ENCODE measurements at regions of chr2 and their contacts with region 1.

Region 1: DNA sequence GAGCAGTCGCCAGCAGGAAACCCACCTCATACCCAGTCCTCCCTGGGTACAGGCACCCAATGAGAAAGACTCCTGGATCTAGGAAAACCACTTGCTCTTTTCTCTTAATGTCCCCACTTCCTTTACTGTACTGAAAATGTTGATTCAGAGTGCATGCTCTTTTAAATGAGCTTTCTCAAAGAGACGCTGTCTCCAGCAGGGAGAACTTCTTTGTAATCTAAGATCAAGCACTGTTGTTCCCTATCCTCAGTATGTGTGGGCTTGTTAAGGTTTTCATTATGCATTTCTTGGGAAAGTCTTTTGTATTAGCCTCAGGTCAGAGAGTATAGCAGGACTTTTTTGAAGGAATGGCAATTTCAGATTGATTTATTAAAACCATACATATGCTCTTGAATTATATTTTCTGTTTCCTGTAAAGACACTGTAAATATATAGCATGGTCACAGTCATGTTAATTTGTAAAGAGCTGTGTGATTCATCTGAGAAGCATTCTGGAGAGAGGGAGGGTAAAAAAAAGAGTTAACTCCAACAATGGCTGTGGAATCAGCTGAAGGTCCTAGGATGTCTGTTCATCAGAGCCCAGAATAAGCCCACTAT is 178.1 kb downstream of the MGAT5 start:
- DNase-seq: no peak
- CTCF ChIP-seq: no peak

Region 2: GRCh38 chr2:134420259-134420658 is 11.7 kb before region 1 on chr2:
- CTCF ChIA-PET with region 1: interaction called, 11 read pairs
- POLR2A ChIA-PET with region 1: no interaction called
- DNase-seq: no peak
- CTCF ChIP-seq: no peak

Region 3: GRCh38 chr2:134446383-134447017 is 14.6 kb after region 1 on chr2:
- CTCF ChIA-PET with region 1: interaction called, 59 read pairs
- POLR2A ChIA-PET with region 1: no interaction called
- DNase-seq: no peak
- CTCF ChIP-seq: no peak

Region 4: GRCh38 chr2:134609924-134610513 is 178.1 kb after region 1 on chr2:
- CTCF ChIA-PET with region 1: no interaction called
- POLR2A ChIA-PET with region 1: no interaction called
- DNase-seq: no peak
- CTCF ChIP-seq: no peak

Region 5: GRCh38 chr2:134668821-134669220 is 236.9 kb after region 1 on chr2:
- CTCF ChIA-PET with region 1: no interaction called
- POLR2A ChIA-PET with region 1: no interaction called
- DNase-seq: peak; percentile 34
- CTCF ChIP-seq: no peak